B cell (primary cell): ENCODE measurements at regions of chr1 and their contacts with region 1.

Region 1: GRCh38 chr1:40668769-40669525 is 3.5 kb upstream of the RIMS3 start:
- DNase-seq: peak; percentile 90
- ATAC-seq: peak; percentile 71
- H3K4me3 ChIP-seq: peak overlapping the region in 4 of 5 experiments; percentile 28 to 69 (median 40)
- H3K4me3 Mint-ChIP-seq: peak overlapping the region; percentile 71
- H3K27ac ChIP-seq: no peak overlapping the region
- H3K27ac Mint-ChIP-seq: peak overlapping the region; percentile 20
- H3K4me1 ChIP-seq: peaks cover 12 to 27% of the 10 kb centered on the region in 2 donors
- H3K4me1 Mint-ChIP-seq: peaks cover 23% of the 10 kb centered on the region
- H3K27me3 ChIP-seq: no peaks in the 10 kb centered on the region
- H3K27me3 Mint-ChIP-seq: peaks cover 5% of the 10 kb centered on the region
- CTCF ChIP-seq: peak; percentile 94

Region 2: GRCh38 chr1:40625066-40625465 is 43.9 kb before region 1 on chr1:
- CTCF ChIA-PET with region 1: interaction called, 12 read pairs
- POLR2A ChIA-PET with region 1: no interaction called
- intact Hi-C with region 1: loop called (anchors 1 kb)
- DNase-seq: peak; percentile 48
- ATAC-seq: peak; percentile 57
- H3K4me3 ChIP-seq: no peak overlapping the region
- H3K4me3 Mint-ChIP-seq: no peak overlapping the region
- H3K27ac ChIP-seq: no peak overlapping the region
- H3K27ac Mint-ChIP-seq: no peak overlapping the region
- H3K4me1 ChIP-seq: peaks cover 6 to 11% of the 10 kb centered on the region in 2 donors
- H3K4me1 Mint-ChIP-seq: peaks cover 10% of the 10 kb centered on the region
- H3K27me3 ChIP-seq: peaks cover 0 to 17% (median 0%) of the 10 kb centered on the region in 4 experiments
- H3K27me3 Mint-ChIP-seq: peaks cover 2% of the 10 kb centered on the region
- CTCF ChIP-seq: peak; percentile 25

Region 3: DNA sequence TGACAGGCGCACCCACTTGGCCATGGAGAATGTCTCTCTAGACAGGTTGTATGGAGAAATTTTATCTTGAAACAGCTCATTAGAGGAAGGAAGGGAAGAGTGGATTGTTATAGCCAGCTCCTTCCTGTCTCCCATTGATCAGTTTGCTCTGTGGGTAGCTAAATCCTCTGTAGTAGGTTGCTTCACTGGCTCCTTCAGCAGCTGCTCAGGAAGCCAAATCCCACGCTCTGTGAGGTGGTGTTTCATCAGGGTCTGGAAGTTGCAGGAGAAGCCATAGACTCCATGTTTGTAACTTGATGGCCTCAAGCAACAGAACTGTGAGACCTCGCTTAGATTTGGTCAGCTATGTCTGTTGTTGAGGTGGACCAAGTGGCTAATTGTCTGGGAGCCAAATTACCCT is 15.7 kb after region 1 on chr1:
- CTCF ChIA-PET with region 1: interaction called, 48 read pairs
- POLR2A ChIA-PET with region 1: no interaction called
- intact Hi-C with region 1: no loop called
- DNase-seq: no peak
- ATAC-seq: no peak
- H3K4me3 ChIP-seq: no peak overlapping the region
- H3K4me3 Mint-ChIP-seq: no peak overlapping the region
- H3K27ac ChIP-seq: no peak overlapping the region
- H3K27ac Mint-ChIP-seq: no peak overlapping the region
- H3K4me1 ChIP-seq: no peaks in the 10 kb centered on the region
- H3K4me1 Mint-ChIP-seq: peaks cover 7% of the 10 kb centered on the region
- H3K27me3 ChIP-seq: no peaks in the 10 kb centered on the region
- H3K27me3 Mint-ChIP-seq: no peaks in the 10 kb centered on the region
- CTCF ChIP-seq: no peak

Region 4: DNA sequence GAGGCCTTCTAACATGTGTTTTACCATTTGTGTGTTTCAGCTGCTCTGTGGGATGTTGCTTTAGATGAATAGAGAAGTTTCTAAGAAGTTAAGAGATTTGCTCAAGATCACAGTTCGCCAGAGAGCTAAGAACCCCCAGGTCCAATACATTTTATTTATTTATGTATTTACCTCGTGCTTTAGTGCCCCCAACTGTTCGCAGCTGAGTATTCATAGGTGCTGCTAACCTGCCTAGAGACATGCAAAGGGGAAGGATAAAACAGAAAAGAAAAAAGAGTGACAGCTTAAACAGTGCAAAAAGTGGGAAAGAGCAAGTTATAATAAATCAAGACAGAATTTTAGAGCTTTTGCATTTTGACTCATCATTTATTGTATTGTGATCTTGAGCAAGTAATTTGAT is 53.7 kb after region 1 on chr1:
- CTCF ChIA-PET with region 1: interaction called, 14 read pairs
- POLR2A ChIA-PET with region 1: interaction called, 4 read pairs
- intact Hi-C with region 1: no loop called
- DNase-seq: peak; percentile 38
- ATAC-seq: no peak
- H3K4me3 ChIP-seq: no peak overlapping the region
- H3K4me3 Mint-ChIP-seq: no peak overlapping the region
- H3K27ac ChIP-seq: peak overlapping the region in 1 of 2 donors; percentile 35
- H3K27ac Mint-ChIP-seq: peak overlapping the region; percentile 37
- H3K4me1 ChIP-seq: peaks cover 8 to 15% of the 10 kb centered on the region in 2 donors
- H3K4me1 Mint-ChIP-seq: peaks cover 62% of the 10 kb centered on the region
- H3K27me3 ChIP-seq: no peaks in the 10 kb centered on the region
- H3K27me3 Mint-ChIP-seq: no peaks in the 10 kb centered on the region
- CTCF ChIP-seq: peak; percentile 29

Region 5: DNA sequence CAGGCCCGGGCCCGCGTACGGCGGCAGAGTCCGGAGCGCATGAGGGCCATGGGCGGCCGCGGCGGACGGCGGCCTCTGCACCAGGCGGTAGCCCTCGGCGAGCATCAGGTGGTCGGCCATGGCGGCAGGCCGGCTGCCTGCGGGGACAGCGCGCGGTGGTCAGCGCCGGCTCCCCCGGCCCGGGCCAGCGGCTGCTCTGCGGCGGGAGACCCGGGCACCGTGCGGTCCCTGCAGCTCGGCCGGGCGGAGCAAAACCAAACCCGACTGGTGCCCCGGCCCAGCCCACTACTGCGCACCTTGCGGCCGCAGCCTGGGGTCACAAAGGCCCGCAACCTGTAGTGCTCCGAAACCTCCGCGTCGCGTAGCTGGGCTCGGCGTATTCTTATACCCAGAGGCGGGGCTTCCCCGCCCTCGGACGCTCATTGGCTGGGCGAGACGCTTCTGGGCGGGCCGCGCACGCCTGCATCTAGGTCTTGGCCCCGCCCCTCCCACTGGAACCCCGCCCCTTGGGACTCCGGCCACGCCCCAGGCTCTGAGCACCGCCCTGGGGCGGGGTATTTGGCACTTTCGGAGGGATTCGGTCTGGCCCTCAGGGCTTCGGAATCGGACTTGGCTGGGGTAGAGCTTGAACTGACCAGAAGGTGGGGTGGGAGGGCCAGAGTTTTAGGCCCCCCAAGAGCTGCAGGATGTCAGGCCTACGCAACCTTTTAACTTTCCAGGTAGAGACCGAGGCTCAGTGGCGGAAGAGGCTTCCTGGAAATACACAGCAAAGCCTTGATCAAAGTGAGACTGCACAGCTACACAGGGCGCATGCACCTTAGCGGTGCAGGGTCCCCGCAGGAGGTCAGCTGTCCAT is 193.3 kb after region 1 on chr1 and contains the start of gene CITED4:
- CTCF ChIA-PET with region 1: interaction called, 5 read pairs
- POLR2A ChIA-PET with region 1: no interaction called
- intact Hi-C with region 1: loop called (anchors 1 kb)
- DNase-seq: peak; percentile 96
- ATAC-seq: peak; percentile 98
- H3K4me3 ChIP-seq: peak within 1 kb of the TSS; percentile 17 to 67 (median 58)
- H3K4me3 Mint-ChIP-seq: peak within 1 kb of the TSS; percentile 98
- H3K27ac ChIP-seq: peak within 1 kb of the TSS in 1 of 2 donors; percentile 23
- H3K27ac Mint-ChIP-seq: peak within 1 kb of the TSS; percentile 88
- H3K4me1 ChIP-seq: peaks cover 11 to 14% of the 10 kb centered on the region in 2 donors
- H3K4me1 Mint-ChIP-seq: peaks cover 9% of the 10 kb centered on the region
- H3K27me3 ChIP-seq: peaks cover 0 to 28% (median 9%) of the 10 kb centered on the region in 4 experiments
- H3K27me3 Mint-ChIP-seq: peaks cover 25% of the 10 kb centered on the region
- CTCF ChIP-seq: no peak
- total RNA-seq, gene CITED4: 3.1 and 3.2 TPM in 2 replicates